ENCODE measurements at regions of chr20 and their contacts with region 1.

Region 1: GRCh38 chr20:44586289-44586911 is 4.0 kb downstream of the PKIG start:
- DNase-seq: peak; percentile 62 to 93 (median 89)
- H3K4me3 ChIP-seq: no peak overlapping the region
- H3K27ac ChIP-seq: peak overlapping the region in 1 of 2 experiments; percentile 25
- H3K4me1 ChIP-seq: peaks cover 15 to 33% (median 21%) of the 10 kb centered on the region in 4 experiments
- H3K27me3 ChIP-seq: no peaks in the 10 kb centered on the region

Region 2: DNA sequence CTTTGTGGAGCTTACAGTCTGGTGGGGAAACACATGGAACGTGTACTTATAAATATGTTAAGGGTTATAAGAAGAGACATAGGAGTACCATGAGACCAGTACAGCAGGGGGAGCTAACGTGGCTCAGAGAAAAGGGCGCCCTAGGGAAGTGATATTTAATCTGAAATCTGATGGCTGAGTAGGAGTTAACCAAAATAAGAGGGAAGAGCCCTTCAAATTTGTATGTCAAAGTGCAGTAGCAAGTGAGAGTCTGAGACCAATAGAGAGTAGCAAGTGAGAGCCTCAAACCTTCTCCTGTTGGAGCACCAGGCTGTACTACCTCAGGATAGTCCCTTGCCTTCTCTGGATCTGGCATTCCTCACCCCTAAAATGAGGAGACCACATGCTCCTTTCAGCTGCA is 10.1 kb before region 1 on chr20:
- CTCF ChIA-PET with region 1: interaction called, 23 read pairs
- POLR2A ChIA-PET with region 1: interaction called, 5 read pairs
- DNase-seq: peak; percentile 68 to 86 (median 82)
- H3K4me3 ChIP-seq: peak overlapping the region in 1 of 7 experiments; percentile 38
- H3K27ac ChIP-seq: no peak overlapping the region
- H3K4me1 ChIP-seq: peaks cover 9 to 56% (median 40%) of the 10 kb centered on the region in 4 experiments
- H3K27me3 ChIP-seq: no peaks in the 10 kb centered on the region

Region 3: DNA sequence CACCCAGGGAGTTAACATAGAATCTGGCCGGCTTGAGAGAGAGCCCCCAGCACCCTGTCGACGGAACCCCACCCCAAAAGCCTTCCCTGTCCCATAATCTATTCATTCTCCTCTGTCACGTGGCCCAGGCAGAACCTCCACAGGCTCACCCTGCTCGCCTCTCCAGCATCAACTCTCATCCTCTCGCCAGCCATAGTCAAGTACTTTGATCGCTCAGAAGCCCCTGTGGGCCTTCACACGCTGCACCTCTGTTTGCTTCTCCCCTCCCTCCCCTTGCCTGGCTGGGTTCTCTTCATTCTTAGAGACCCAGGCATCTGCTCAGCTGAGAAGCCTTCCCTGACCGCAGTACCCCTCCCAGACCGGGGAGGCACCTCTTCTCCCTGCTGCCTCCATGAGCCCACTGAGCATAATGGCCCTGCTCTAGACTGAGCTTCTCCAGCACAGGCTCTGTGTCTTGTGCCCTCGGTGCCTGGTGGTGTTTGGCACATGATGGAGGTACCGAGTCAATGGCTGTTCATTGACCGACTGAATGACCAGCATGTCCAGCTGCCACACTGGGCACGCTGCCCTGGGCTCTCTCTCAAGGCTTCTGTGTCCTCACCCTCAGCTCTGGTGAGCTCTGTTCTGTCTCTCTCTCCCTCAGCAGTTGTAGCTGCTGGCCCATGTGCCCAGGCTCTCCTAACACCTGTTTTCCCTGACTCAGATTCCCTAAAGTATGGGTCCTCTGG is 29.6 kb after region 1 on chr20:
- CTCF ChIA-PET with region 1: no interaction called
- POLR2A ChIA-PET with region 1: no interaction called
- DNase-seq: no peak
- H3K4me3 ChIP-seq: no peak overlapping the region
- H3K27ac ChIP-seq: peak overlapping the region in 1 of 2 experiments; percentile 70
- H3K4me1 ChIP-seq: peaks cover 6 to 58% (median 26%) of the 10 kb centered on the region in 4 experiments
- H3K27me3 ChIP-seq: no peaks in the 10 kb centered on the region